Activated T-helper 1 cell treated with anti-CD3 and anti-CD28 coated beads, Interleukin-12 subunit alpha, Interleukin-12 subunit beta, Interleukin-2, Interleukin-4 antibody, amounts not matched to agents 30 ng/mL and 10 ng/mL and 1 ng/mL, durations not matched to agents 14 hours and 24 hours and 36 hours (primary cell): ENCODE measurements at regions of chr2 and their contacts with region 1.

Region 1: DNA sequence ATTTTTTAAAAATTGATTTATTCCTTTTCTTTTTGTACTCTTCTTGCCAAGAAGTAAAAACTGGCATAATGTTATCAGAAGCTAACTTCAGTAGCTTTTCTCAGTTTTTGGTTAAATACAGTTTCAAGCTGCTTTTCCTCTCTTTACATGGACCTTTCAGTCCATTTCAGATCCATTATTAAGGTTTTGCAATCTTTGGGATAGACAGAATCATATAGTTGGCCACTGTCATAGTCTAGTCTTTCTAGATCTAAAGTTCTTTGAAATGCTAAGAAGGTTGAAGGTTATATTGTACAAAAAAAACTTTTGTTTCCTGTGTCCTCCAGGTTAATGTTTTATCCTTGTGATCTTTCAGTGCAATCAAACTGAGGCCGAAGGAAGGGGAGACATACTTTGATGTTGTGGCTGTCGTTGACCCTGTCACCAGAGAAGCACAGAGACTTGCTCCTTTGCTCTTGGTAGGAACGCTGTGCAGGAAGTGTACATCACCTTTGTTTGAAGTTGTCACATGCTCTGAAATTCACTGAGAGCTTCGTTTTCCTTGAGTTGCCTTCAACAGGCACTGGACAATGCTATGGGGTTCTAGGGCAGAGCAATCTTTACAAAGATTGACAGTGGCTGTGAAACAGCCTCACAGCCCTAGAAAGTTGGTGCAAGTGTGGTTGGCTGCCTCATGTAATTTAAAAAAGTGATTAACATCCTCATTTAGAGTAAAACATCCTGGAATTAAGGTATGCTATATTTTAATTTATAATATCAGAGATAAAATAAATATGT is 79.1 kb downstream of the UGGT1 start:
- DNase-seq: no peak
- H3K4me3 Mint-ChIP-seq: no peak overlapping the region
- H3K27ac Mint-ChIP-seq: no peak overlapping the region
- H3K4me1 Mint-ChIP-seq: peaks cover 15% of the 10 kb centered on the region
- H3K27me3 Mint-ChIP-seq: no peaks in the 10 kb centered on the region

Region 2: GRCh38 chr2:128154225-128154624 is 15.9 kb before region 1 on chr2:
- intact Hi-C with region 1: loop called (anchors 2 kb)
- DNase-seq: no peak
- H3K4me3 Mint-ChIP-seq: no peak overlapping the region
- H3K27ac Mint-ChIP-seq: no peak overlapping the region
- H3K4me1 Mint-ChIP-seq: no peaks in the 10 kb centered on the region
- H3K27me3 Mint-ChIP-seq: no peaks in the 10 kb centered on the region

Region 3: DNA sequence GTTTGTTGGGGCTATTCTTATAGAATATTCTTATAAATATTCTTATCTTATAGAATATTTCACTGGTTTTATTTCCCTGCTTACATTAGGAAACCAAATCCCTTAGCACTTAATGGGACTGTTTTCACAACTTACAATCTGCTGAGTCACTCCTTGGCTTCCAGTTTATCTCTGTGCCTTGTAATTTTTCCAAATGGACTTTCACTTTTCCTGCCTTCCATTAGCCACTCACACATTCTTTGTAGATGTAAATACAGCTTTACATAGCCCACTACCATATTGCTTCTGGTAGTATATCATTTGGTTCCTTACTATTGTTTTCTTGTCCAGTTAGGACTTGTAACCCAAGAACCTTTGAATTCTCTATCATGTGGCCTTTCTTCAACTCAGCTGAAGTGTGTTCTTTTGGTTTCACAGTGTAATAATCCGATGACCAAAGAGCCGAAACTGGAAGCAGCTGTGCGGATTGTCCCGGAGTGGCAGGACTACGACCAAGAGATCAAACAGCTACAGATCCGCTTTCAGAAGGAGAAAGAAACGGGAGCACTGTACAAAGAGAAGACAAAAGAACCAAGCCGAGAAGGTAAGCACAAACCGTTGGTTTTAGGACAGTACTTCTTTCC is 17.0 kb after region 1 on chr2:
- intact Hi-C with region 1: no loop called
- DNase-seq: no peak
- H3K4me3 Mint-ChIP-seq: no peak overlapping the region
- H3K27ac Mint-ChIP-seq: no peak overlapping the region
- H3K4me1 Mint-ChIP-seq: no peaks in the 10 kb centered on the region
- H3K27me3 Mint-ChIP-seq: no peaks in the 10 kb centered on the region